Keratinocyte (primary cell): ENCODE measurements at regions of chr7 and their contacts with region 1.

Region 1: GRCh38 chr7:85186521-85187241 is at the start of gene SEMA3D:
- DNase-seq: no peak
- H3K4me3 ChIP-seq: peak within 1 kb of the TSS; percentile 54 to 84 (median 80)
- H3K27ac ChIP-seq: no peak within 1 kb of the TSS
- H3K4me1 ChIP-seq: peaks cover 5% of the 10 kb centered on the region
- H3K27me3 ChIP-seq: no peaks in the 10 kb centered on the region
- CTCF ChIP-seq: peak; percentile 64 to 91 (median 86)
- polyA plus RNA-seq, gene SEMA3D: 2.8 to 6.7 TPM (median 5.2 TPM) in 3 replicates

Region 2: GRCh38 chr7:84469034-84469433 is 717.6 kb before region 1 on chr7:
- dilution Hi-C with region 1: no loop called
- DNase-seq: no peak
- H3K4me3 ChIP-seq: no peak overlapping the region
- H3K27ac ChIP-seq: no peak overlapping the region
- H3K4me1 ChIP-seq: no peaks in the 10 kb centered on the region
- H3K27me3 ChIP-seq: peaks cover 3% of the 10 kb centered on the region
- CTCF ChIP-seq: no peak

Region 3: DNA sequence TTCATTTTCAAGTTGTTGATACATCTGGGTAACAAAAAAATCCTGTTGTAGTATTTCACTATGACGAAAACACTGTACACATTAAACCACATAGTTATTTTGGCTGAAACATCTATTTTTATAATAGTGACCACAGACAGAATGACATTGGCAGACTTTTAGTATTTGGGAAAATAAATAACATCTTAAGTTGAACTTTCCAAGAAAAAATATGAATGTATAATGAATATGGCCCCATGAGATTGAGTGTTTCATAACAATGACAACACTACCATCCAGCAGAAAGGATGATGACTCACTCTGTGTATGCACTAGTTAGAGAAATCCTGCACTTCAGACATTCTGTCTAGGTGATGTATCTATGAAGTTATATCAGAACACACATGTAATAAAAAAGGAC is 117.9 kb before region 1 on chr7:
- dilution Hi-C with region 1: loop called (anchors 25 kb)
- DNase-seq: peak; percentile 19
- H3K4me3 ChIP-seq: no peak overlapping the region
- H3K27ac ChIP-seq: no peak overlapping the region
- H3K4me1 ChIP-seq: peaks cover 14% of the 10 kb centered on the region
- H3K27me3 ChIP-seq: no peaks in the 10 kb centered on the region
- CTCF ChIP-seq: no peak

Region 4: GRCh38 chr7:85306115-85306514 is 119.4 kb after region 1 on chr7:
- dilution Hi-C with region 1: no loop called
- DNase-seq: no peak
- H3K4me3 ChIP-seq: no peak overlapping the region
- H3K27ac ChIP-seq: no peak overlapping the region
- H3K4me1 ChIP-seq: no peaks in the 10 kb centered on the region
- H3K27me3 ChIP-seq: no peaks in the 10 kb centered on the region
- CTCF ChIP-seq: no peak

Region 5: DNA sequence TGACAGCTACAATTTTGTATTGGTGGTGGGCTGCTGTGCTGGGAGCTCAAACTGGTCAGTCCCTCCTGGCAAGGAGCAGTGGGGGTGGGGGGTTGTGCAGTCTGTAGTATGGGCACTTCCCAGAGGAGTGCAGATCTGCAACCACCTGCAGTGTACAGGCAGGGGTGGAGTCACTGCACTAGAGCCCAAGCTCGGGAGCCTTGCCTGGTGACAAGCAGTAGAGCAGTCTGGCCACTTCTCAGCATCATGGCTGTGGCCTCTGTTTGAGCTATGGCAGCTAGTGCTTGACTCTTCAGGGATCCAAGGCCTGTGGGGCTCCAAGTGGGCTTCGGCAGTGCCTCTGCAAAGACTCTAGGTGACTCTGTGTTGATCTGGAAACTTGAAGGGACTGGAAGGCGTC is 872.0 kb after region 1 on chr7:
- dilution Hi-C with region 1: no loop called
- DNase-seq: no peak
- H3K4me3 ChIP-seq: no peak overlapping the region
- H3K27ac ChIP-seq: no peak overlapping the region
- H3K4me1 ChIP-seq: no peaks in the 10 kb centered on the region
- H3K27me3 ChIP-seq: no peaks in the 10 kb centered on the region
- CTCF ChIP-seq: no peak